K562 (cell line): ENCODE measurements at regions of chr19 and their contacts with region 1.

Region 1: DNA sequence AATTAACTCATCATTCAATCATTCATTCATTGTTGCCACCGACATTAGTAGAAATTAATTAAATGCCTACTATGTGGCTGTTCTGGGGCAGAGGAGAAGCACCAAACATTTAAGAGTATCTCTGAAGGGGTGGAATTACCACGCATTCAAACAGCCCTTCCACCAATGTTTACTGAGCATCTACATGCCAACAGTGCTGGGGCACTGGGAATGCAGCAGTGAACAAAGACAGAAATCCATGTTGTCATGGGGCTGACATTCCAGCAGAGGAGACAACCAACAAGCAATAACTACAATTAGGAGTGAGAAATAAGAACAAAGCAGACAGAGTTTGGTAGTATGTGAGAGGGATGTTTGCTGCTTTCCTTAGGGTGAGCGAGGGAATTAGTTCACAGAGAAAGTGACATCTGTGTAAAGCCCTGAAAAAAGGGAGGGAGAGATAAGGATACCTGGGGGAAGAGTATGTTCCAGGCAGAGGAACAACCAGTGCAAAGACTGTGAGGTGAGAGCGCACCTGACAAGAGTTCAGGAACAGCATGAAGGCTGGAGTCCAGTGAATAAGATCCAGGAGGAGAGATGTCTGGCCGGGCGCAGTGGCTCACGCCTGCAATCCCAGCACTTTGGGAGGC is 1.3 kb upstream of the PAK4 start:
- DNase-seq: no peak
- ATAC-seq: no peak
- H3K4me3 ChIP-seq: no peak overlapping the region
- H3K27ac ChIP-seq: no peak overlapping the region
- H3K4me1 ChIP-seq: peaks cover 3 to 24% of the 10 kb centered on the region in 2 experiments; a peak in 3 of 5 replicates
- H3K27me3 ChIP-seq: no peaks in the 10 kb centered on the region; a peak in 1 of 5 replicates
- CTCF ChIP-seq: no peak
- EP300 ChIP-seq: no peak
- POLR2A ChIP-seq: no peak
- RAD21 ChIP-seq: no peak

Region 2: DNA sequence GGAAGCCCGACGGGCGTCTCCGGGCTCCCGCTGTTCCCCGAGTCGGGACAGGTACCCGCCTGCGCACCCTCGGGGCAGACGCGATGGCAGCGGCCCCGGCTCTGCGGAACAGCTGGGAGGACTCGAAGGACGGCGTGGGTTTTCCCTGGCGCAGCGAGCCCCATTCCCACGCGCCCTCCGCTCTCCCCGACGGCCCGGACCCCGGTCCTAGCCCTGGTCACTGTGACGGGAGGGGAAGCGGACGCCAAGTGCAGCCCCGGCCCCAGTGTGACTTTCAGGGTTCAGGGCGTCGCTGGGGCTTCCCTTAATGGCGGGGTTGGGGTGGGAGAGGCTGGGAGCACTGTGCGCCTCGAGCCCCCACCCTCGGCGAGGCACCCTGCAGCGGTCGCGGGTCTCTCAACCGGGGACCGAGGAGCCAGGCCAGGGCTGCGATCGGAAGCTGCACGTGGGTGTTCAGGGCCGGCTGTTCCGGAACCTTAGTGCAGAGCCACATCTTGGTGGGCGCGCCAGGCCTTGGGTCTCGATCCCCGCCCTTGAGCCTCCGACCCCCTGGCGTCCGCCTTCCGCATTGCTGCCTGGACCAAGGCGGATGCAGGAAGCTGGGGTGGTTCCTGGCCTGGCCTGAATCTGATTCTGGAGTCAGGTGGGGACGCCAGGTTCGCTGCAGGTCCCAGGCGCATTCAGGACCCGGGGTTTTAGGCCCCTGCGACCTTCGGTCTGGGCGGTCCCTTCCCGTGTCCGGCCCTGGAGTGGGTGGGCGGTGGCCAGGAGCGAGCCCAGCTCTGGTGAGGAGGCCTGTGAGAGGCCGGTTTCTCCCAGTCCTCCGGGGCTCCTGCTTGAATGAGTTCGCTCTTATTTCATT is 331.8 kb before region 1 on chr19:
- CTCF ChIA-PET with region 1: no interaction called
- POLR2A ChIA-PET with region 1: no interaction called
- in situ Hi-C with region 1: no loop called
- intact Hi-C with region 1: no loop called
- DNase-seq: no peak
- ATAC-seq: no peak
- H3K4me3 ChIP-seq: no peak overlapping the region
- H3K27ac ChIP-seq: no peak overlapping the region
- H3K4me1 ChIP-seq: peaks cover 0 to 8% of the 10 kb centered on the region in 2 experiments; a peak in 2 of 5 replicates
- H3K27me3 ChIP-seq: no peaks in the 10 kb centered on the region
- CTCF ChIP-seq: no peak
- EP300 ChIP-seq: no peak
- POLR2A ChIP-seq: no peak
- RAD21 ChIP-seq: no peak

Region 3: DNA sequence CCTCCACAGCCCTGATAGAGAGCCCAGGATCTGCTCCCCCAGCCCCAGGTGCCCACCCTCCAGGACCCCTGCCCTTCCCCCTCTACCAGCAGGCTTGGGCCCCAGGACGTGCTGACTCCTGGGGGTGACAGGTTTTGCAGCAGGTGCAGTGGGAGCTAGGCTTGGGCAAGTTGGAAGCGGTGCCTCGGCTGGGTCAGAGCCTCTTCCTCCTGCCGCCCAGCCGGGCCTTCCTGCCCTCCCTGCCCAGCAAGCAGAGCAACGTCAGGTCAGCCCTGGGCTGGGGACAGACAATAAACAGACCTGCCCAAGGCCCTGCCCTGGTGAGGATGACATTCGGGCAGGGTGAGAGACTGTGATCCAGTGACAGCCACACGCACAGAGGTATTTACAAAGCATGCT is 63.3 kb after region 1 on chr19:
- CTCF ChIA-PET with region 1: interaction called, 3 read pairs
- POLR2A ChIA-PET with region 1: interaction called, 3 read pairs
- in situ Hi-C with region 1: loop called (anchors 5 kb)
- intact Hi-C with region 1: loop called (anchors 1 kb)
- DNase-seq: no peak
- ATAC-seq: peak; percentile 24
- H3K4me3 ChIP-seq: no peak overlapping the region
- H3K27ac ChIP-seq: no peak overlapping the region
- H3K4me1 ChIP-seq: peaks cover 0 to 11% of the 10 kb centered on the region in 2 experiments; a peak in 4 of 5 replicates
- H3K27me3 ChIP-seq: no peaks in the 10 kb centered on the region
- CTCF ChIP-seq: no peak
- EP300 ChIP-seq: no peak
- POLR2A ChIP-seq: no peak
- RAD21 ChIP-seq: no peak

Region 4: DNA sequence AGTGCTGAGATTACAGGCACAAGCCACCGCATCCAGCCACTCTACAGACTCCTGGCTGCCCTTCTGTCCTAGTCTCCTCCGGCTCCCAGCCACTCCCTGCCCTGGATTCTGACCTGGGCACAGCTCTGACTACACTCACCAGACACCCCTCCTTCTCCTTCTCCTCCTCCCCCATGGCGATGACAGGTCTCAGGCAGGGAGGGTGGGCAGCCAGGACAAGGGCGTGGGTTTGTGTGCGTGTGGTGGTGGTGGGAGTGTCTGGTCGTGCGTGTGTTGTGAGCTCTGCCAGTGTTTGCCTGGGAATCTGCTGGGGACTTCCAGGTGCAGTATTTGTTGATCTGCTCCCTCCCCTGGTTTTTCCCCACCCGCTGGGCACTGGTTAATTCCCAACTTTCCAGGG is 69.6 kb after region 1 on chr19:
- CTCF ChIA-PET with region 1: interaction called, 3 read pairs
- POLR2A ChIA-PET with region 1: interaction called, 3 read pairs
- in situ Hi-C with region 1: loop called (anchors 5 kb)
- intact Hi-C with region 1: no loop called
- DNase-seq: no peak
- ATAC-seq: no peak
- H3K4me3 ChIP-seq: no peak overlapping the region
- H3K27ac ChIP-seq: no peak overlapping the region
- H3K4me1 ChIP-seq: peaks cover 0 to 22% of the 10 kb centered on the region in 2 experiments; a peak in 3 of 5 replicates
- H3K27me3 ChIP-seq: peaks cover 3 to 27% of the 10 kb centered on the region in 2 experiments; a peak in 2 of 5 replicates
- CTCF ChIP-seq: no peak
- EP300 ChIP-seq: no peak
- POLR2A ChIP-seq: no peak
- RAD21 ChIP-seq: no peak

Region 5: DNA sequence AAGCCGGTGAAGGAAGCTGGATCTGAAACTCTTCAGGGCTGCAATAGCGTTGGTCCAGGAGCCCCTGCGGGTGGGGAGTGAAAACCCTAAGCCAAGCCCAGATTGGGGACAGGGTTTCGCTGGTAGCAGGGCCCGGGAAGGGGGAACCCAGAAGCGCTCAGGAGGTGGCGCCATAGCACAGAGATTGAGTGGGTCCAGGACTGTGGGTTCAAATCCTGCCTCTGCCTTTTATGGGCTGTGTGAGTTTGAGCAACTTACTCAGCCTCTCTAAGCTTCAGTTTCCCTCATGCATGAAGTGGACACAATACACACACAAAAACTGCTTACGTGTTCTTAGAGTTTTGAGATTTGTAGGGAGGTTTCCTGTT is 88.1 kb after region 1 on chr19:
- CTCF ChIA-PET with region 1: no interaction called
- POLR2A ChIA-PET with region 1: interaction called, 3 read pairs
- in situ Hi-C with region 1: no loop called
- intact Hi-C with region 1: loop called (anchors 5 kb)
- DNase-seq: peak; percentile 48 to 75 (median 60)
- ATAC-seq: peak; percentile 96
- H3K4me3 ChIP-seq: no peak overlapping the region
- H3K27ac ChIP-seq: no peak overlapping the region
- H3K4me1 ChIP-seq: no peaks in the 10 kb centered on the region
- H3K27me3 ChIP-seq: peaks cover 0 to 5% of the 10 kb centered on the region in 2 experiments; a peak in 1 of 5 replicates
- CTCF ChIP-seq: peak; percentile 84 to 90 (median 89)
- EP300 ChIP-seq: no peak
- POLR2A ChIP-seq: no peak
- RAD21 ChIP-seq: peak; percentile 78 to 97

Region 6: GRCh38 chr19:39328046-39328705 is 203.9 kb after region 1 on chr19:
- CTCF ChIA-PET with region 1: interaction called, 34 read pairs
- POLR2A ChIA-PET with region 1: interaction called, 3 read pairs
- in situ Hi-C with region 1: loop called (anchors 5 kb)
- intact Hi-C with region 1: loop called (anchors 1 kb)
- DNase-seq: peak; percentile 76 to 86 (median 79)
- ATAC-seq: peak; percentile 83
- H3K4me3 ChIP-seq: no peak overlapping the region
- H3K27ac ChIP-seq: no peak overlapping the region
- H3K4me1 ChIP-seq: peaks cover 0 to 3% of the 10 kb centered on the region in 2 experiments; a peak in 2 of 5 replicates
- H3K27me3 ChIP-seq: no peaks in the 10 kb centered on the region
- CTCF ChIP-seq: peak; percentile 90 to 96 (median 91)
- EP300 ChIP-seq: no peak
- POLR2A ChIP-seq: no peak
- RAD21 ChIP-seq: peak; percentile 95 to 96